ENCODE measurements at regions of chr21 and their contacts with region 1.

Region 1: GRCh38 chr21:15592271-15592860 is 137.4 kb upstream of the USP25 start:
- DNase-seq: no peak
- H3K4me3 ChIP-seq: no peak overlapping the region
- H3K27ac ChIP-seq: no peak overlapping the region
- H3K4me1 ChIP-seq: no peaks in the 10 kb centered on the region
- H3K27me3 ChIP-seq: no peaks in the 10 kb centered on the region
- CTCF ChIP-seq: peak; percentile 49 to 64 (median 54)
- EP300 ChIP-seq: no peak
- POLR2A ChIP-seq: no peak

Region 2: DNA sequence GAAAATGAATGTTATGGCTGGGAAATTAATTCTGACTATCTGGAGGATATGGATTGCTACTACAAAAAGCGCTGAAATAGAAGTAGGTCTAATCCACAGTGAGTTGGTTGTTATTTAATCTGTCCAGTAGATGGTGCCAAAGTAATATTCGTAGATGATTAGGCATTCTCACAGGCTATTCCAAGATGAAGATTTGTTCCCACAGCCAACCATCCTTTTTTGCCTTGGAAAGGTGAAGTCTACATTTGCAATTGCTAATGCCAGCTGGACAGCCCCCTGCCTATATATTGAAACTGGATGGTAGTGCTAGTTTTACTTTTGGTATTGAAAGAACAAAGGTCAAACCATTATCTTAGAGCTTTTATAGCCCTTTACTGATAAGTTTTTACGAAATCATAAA is 1332.6 kb before region 1 on chr21:
- in situ Hi-C with region 1: loop called in 2 of 4 experiments (anchors 10 to 25 kb)
- intact Hi-C with region 1: loop called (anchors 5 kb)
- DNase-seq: no peak
- H3K4me3 ChIP-seq: peak overlapping the region in 1 of 4 donors; percentile 17
- H3K27ac ChIP-seq: peak overlapping the region; percentile 49 to 69 (median 58)
- H3K4me1 ChIP-seq: peaks cover 0 to 49% (median 16%) of the 10 kb centered on the region in 4 donors
- H3K27me3 ChIP-seq: no peaks in the 10 kb centered on the region
- CTCF ChIP-seq: peak; percentile 44 to 64 (median 54)
- EP300 ChIP-seq: no peak
- POLR2A ChIP-seq: no peak

Region 3: GRCh38 chr21:14403681-14404318 is 1188.6 kb before region 1 on chr21:
- in situ Hi-C with region 1: loop called in 3 of 4 experiments (anchors 10 to 25 kb)
- intact Hi-C with region 1: no loop called
- DNase-seq: no peak
- H3K4me3 ChIP-seq: no peak overlapping the region
- H3K27ac ChIP-seq: no peak overlapping the region
- H3K4me1 ChIP-seq: no peaks in the 10 kb centered on the region
- H3K27me3 ChIP-seq: no peaks in the 10 kb centered on the region
- CTCF ChIP-seq: peak; percentile 47 to 56 (median 50)
- EP300 ChIP-seq: no peak
- POLR2A ChIP-seq: no peak

Region 4: DNA sequence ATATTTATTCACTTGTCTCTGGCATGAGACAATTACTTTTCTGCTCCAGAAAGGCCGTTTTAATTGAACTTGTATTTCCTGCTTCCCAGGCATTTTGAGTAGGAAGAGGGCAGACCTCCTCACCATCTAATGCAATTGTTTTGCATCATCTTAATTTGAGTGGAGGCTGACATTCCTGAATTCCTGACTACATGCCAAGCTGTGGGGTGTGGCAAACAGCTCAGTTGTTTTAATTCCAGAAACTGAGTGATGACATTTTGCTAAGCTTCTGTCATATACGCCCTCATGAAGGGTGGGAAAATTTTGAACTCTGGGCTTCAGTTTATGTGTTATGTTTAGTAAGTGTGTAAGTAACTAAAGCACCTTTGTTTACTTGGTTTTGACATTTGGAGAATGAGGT is 12.1 kb after region 1 on chr21:
- in situ Hi-C with region 1: no loop called
- intact Hi-C with region 1: no loop called
- DNase-seq: no peak
- H3K4me3 ChIP-seq: no peak overlapping the region
- H3K27ac ChIP-seq: no peak overlapping the region
- H3K4me1 ChIP-seq: no peaks in the 10 kb centered on the region
- H3K27me3 ChIP-seq: no peaks in the 10 kb centered on the region
- CTCF ChIP-seq: no peak
- EP300 ChIP-seq: no peak
- POLR2A ChIP-seq: no peak